GM13977 (cell line): ENCODE measurements at regions of chr10 and their contacts with region 1.

Region 1: GRCh38 chr10:107409522-107409921 is 245.0 kb upstream of the SORCS1 start:
- DNase-seq: no peak
- CTCF ChIP-seq: peak; percentile 69

Region 2: GRCh38 chr10:107072786-107073185 is 336.7 kb before region 1 on chr10:
- in situ Hi-C with region 1: no loop called
- DNase-seq: no peak
- CTCF ChIP-seq: no peak

Region 3: GRCh38 chr10:107814865-107815487 is 405.5 kb after region 1 on chr10:
- in situ Hi-C with region 1: loop called (anchors 25 kb)
- DNase-seq: peak; percentile 27
- CTCF ChIP-seq: peak; percentile 77

Region 4: GRCh38 chr10:108204479-108205305 is 795.2 kb after region 1 on chr10:
- in situ Hi-C with region 1: no loop called
- DNase-seq: peak; percentile 24
- CTCF ChIP-seq: peak; percentile 82